HepG2 (cell line): ENCODE measurements at regions of chr17 and their contacts with region 1.

Region 1: GRCh38 chr17:82494236-82495055 is 25.1 kb upstream of the FOXK2 start:
- DNase-seq: peak; percentile 97
- ATAC-seq: peak; percentile 89
- H3K4me3 ChIP-seq: peak overlapping the region; percentile 57 to 69 (median 60); a peak in 5 of 6 replicates
- H3K27ac ChIP-seq: peak overlapping the region; percentile 11
- H3K4me1 ChIP-seq: peaks cover 55% of the 10 kb centered on the region
- H3K27me3 ChIP-seq: no peaks in the 10 kb centered on the region; a peak in 1 of 5 replicates
- CTCF ChIP-seq: peak; percentile 99
- EP300 ChIP-seq: no peak
- POLR2A ChIP-seq: no peak
- RAD21 ChIP-seq: peak; percentile 82

Region 2: DNA sequence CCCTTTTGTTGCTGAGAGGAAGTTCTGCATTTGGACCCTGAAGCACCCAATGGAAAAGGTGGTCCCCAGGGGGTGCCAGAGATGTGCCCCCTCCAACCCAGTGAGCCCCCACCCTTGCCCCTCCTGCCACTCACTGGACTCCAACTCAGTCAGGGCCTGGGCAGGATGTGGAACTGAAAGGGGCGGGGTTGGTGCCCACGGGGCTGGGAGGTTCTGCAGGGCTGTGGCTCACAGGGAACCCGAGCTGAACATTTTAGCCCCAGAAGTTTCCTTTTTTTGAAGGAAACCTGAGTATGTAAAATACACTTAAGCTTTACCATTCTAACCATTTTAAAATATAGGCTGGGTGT is 60.3 kb before region 1 on chr17:
- CTCF ChIA-PET with region 1: no interaction called
- POLR2A ChIA-PET with region 1: no interaction called
- in situ Hi-C with region 1: no loop called
- intact Hi-C with region 1: no loop called
- DNase-seq: no peak
- ATAC-seq: no peak
- H3K4me3 ChIP-seq: no peak overlapping the region
- H3K27ac ChIP-seq: no peak overlapping the region
- H3K4me1 ChIP-seq: no peaks in the 10 kb centered on the region
- H3K27me3 ChIP-seq: no peaks in the 10 kb centered on the region
- CTCF ChIP-seq: no peak
- EP300 ChIP-seq: no peak
- POLR2A ChIP-seq: no peak
- RAD21 ChIP-seq: no peak

Region 3: DNA sequence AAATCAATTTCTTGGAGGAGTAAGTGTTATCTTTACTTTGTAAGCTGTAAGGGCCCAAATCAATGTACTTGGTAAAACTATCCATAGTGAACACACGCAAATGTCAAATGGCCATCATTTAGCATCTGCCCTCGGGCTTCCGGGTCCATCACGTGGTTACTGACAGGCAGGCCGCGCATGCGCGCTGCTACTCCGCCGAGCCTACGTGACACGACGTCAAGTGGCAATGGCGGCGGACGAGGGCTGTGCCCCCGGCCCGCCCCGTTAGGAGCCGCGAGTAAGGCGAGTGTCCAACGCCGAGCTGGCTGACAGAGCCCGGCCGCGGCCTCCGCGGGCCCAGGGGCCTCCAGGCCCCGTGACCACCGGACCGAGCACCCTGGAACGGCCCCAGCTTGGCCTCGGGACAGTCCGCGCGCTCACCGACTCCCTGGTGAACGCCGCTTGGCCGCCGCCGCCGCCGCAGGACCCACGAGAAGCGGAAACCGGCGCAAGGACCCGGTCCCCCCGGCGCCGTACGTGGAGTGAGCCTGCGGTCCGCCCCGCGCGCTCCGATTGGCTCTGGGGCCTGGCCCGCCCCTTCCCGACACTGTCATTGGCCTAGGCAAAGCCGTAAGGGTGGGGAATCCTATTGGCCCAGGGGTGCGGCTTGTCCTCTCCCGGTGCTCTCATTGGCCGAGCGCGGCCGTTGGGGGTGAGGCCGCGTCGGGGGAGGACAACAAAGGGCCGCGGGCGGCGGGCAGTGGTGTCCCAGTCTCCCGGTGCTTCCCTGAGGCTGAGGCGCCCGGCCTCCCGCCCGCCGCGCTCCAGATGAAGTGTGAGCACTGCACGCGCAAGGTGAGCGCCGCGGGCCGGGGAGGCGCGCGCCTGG is 36.2 kb before region 1 on chr17 and contains the start of gene NARF:
- CTCF ChIA-PET with region 1: no interaction called
- POLR2A ChIA-PET with region 1: interaction called, 5 read pairs
- in situ Hi-C with region 1: no loop called
- intact Hi-C with region 1: loop called (anchors 1 kb)
- DNase-seq: peak; percentile 99
- ATAC-seq: peak; percentile 96
- H3K4me3 ChIP-seq: peak within 1 kb of the TSS; percentile 85 to 99 (median 87)
- H3K27ac ChIP-seq: peak within 1 kb of the TSS; percentile 96
- H3K4me1 ChIP-seq: peaks cover 56% of the 10 kb centered on the region
- H3K27me3 ChIP-seq: no peaks in the 10 kb centered on the region
- CTCF ChIP-seq: no peak
- EP300 ChIP-seq: peak in 1 of 2 experiments; percentile 9; a peak in 2 of 4 replicates
- POLR2A ChIP-seq: peak; percentile 91 to 96
- RAD21 ChIP-seq: peak; percentile 84
- total RNA-seq, gene NARF: 61.1 and 69.8 TPM in 2 replicates

Region 4: GRCh38 chr17:82507631-82508175 is 13.3 kb after region 1 on chr17:
- CTCF ChIA-PET with region 1: no interaction called
- POLR2A ChIA-PET with region 1: interaction called, 18 read pairs
- in situ Hi-C with region 1: no loop called
- intact Hi-C with region 1: no loop called
- DNase-seq: peak; percentile 51
- ATAC-seq: peak; percentile 9; the same call in 1 of the 3 replicates
- H3K4me3 ChIP-seq: no peak overlapping the region
- H3K27ac ChIP-seq: no peak overlapping the region
- H3K4me1 ChIP-seq: peaks cover 51% of the 10 kb centered on the region
- H3K27me3 ChIP-seq: no peaks in the 10 kb centered on the region
- CTCF ChIP-seq: no peak
- EP300 ChIP-seq: no peak
- POLR2A ChIP-seq: no peak
- RAD21 ChIP-seq: no peak

Region 5: GRCh38 chr17:82561429-82562035 is 67.1 kb after region 1 on chr17:
- CTCF ChIA-PET with region 1: no interaction called
- POLR2A ChIA-PET with region 1: no interaction called
- in situ Hi-C with region 1: no loop called
- intact Hi-C with region 1: no loop called
- DNase-seq: peak; percentile 47
- ATAC-seq: peak; percentile 77
- H3K4me3 ChIP-seq: peak overlapping the region; percentile 25 to 64 (median 28)
- H3K27ac ChIP-seq: peak overlapping the region; percentile 75
- H3K4me1 ChIP-seq: peaks cover 91% of the 10 kb centered on the region
- H3K27me3 ChIP-seq: no peaks in the 10 kb centered on the region
- CTCF ChIP-seq: no peak
- EP300 ChIP-seq: no peak; a peak in 1 of 4 replicates
- POLR2A ChIP-seq: no peak
- RAD21 ChIP-seq: no peak